ENCODE measurements at regions of chr5 and their contacts with region 1.

Region 1: DNA sequence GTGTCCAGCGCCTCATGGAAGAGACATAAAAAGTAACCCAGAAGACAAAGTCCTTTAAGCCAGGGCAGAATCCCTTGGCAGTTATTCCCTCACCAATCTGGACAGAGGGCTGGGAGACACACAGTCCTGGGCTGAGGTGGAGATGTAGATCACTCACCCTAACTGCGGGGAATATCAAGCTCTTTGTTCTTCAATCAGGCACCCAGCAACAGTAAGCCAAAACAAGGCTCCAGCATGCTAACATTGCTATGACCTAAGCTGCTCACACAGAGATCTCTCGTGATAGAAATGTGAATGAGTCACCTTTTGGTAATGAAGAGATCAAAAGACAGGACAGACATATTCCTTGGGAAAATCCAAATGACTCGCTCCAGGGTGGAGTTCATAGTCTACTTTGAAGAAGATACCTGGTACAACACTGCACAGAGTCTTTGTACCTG is 101.3 kb downstream of the FBN2 start:
- DNase-seq: no peak
- ATAC-seq: peak in 1 of 4 donors; percentile 43
- H3K4me3 ChIP-seq: no peak overlapping the region
- H3K27ac ChIP-seq: no peak overlapping the region
- H3K4me1 ChIP-seq: peaks cover 0 to 6% (median 0%) of the 10 kb centered on the region in 12 donors
- H3K27me3 ChIP-seq: no peaks in the 10 kb centered on the region
- CTCF ChIP-seq: no peak
- POLR2A ChIP-seq: no peak

Region 2: GRCh38 chr5:128403333-128403732 is 33.4 kb before region 1 on chr5:
- intact Hi-C with region 1: loop called in 1 of 10 experiments (anchors 5 kb)
- DNase-seq: no peak
- ATAC-seq: no peak
- H3K4me3 ChIP-seq: no peak overlapping the region
- H3K27ac ChIP-seq: no peak overlapping the region
- H3K4me1 ChIP-seq: peaks cover 0 to 5% (median 0%) of the 10 kb centered on the region in 12 donors
- H3K27me3 ChIP-seq: no peaks in the 10 kb centered on the region
- CTCF ChIP-seq: no peak
- POLR2A ChIP-seq: no peak